ENCODE measurements at regions of chr1 and their contacts with region 1.

Region 1: GRCh38 chr1:12124693-12125421 is 41.9 kb upstream of the TNFRSF1B start:
- DNase-seq: peak; percentile 77
- H3K4me3 ChIP-seq: peak overlapping the region in 1 of 2 experiments; percentile 14; a peak in 1 of 4 replicates
- H3K27ac ChIP-seq: no peak overlapping the region
- H3K4me1 ChIP-seq: no peaks in the 10 kb centered on the region
- H3K27me3 ChIP-seq: peaks cover 3% of the 10 kb centered on the region; the same call in 1 of the 2 replicates
- CTCF ChIP-seq: peak; percentile 95
- EP300 ChIP-seq: no peak
- RAD21 ChIP-seq: peak; percentile 99

Region 2: GRCh38 chr1:11126569-11126968 is 998.3 kb before region 1 on chr1:
- CTCF ChIA-PET with region 1: no interaction called
- POLR2A ChIA-PET with region 1: no interaction called
- DNase-seq: no peak
- H3K4me3 ChIP-seq: no peak overlapping the region
- H3K27ac ChIP-seq: no peak overlapping the region
- H3K4me1 ChIP-seq: no peaks in the 10 kb centered on the region
- H3K27me3 ChIP-seq: no peaks in the 10 kb centered on the region
- CTCF ChIP-seq: no peak
- EP300 ChIP-seq: no peak
- RAD21 ChIP-seq: no peak

Region 3: DNA sequence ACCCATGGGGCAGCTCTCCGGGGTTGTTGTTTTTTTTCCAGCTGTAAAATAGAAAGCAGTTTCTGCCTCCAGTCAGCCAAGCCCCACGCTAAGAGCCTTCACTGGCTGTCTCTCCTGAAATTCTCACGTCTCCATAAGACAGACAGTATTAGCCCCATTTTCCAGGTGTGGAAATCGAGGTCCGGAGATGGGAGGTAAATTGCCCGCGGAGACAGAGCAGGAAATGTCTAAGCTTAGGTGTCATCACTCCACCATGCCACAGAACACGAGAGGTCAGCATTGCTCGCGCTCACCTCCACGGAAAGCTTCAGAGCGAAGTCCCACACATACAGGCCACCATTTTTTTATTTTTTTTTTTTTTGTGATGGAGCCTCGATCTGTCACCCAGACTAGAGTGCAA is 17.1 kb before region 1 on chr1:
- CTCF ChIA-PET with region 1: interaction called, 55 read pairs
- POLR2A ChIA-PET with region 1: no interaction called
- DNase-seq: no peak
- H3K4me3 ChIP-seq: no peak overlapping the region
- H3K27ac ChIP-seq: no peak overlapping the region
- H3K4me1 ChIP-seq: no peaks in the 10 kb centered on the region; a peak in 1 of 4 replicates
- H3K27me3 ChIP-seq: peaks cover 7% of the 10 kb centered on the region; the same call in 1 of the 2 replicates
- CTCF ChIP-seq: no peak
- EP300 ChIP-seq: no peak
- RAD21 ChIP-seq: no peak

Region 4: GRCh38 chr1:12153181-12153785 is 28.4 kb after region 1 on chr1:
- CTCF ChIA-PET with region 1: interaction called, 34 read pairs
- POLR2A ChIA-PET with region 1: no interaction called
- DNase-seq: no peak
- H3K4me3 ChIP-seq: no peak overlapping the region
- H3K27ac ChIP-seq: no peak overlapping the region
- H3K4me1 ChIP-seq: peaks cover 0 to 6% of the 10 kb centered on the region in 2 experiments; a peak in 1 of 4 replicates
- H3K27me3 ChIP-seq: no peaks in the 10 kb centered on the region
- CTCF ChIP-seq: no peak
- EP300 ChIP-seq: no peak
- RAD21 ChIP-seq: no peak

Region 5: GRCh38 chr1:12184008-12184681 is 59.3 kb after region 1 on chr1:
- CTCF ChIA-PET with region 1: interaction called, 79 read pairs
- POLR2A ChIA-PET with region 1: no interaction called
- DNase-seq: peak; percentile 93
- H3K4me3 ChIP-seq: no peak overlapping the region
- H3K27ac ChIP-seq: peak overlapping the region; percentile 17 to 81; a peak in 3 of 4 replicates
- H3K4me1 ChIP-seq: peaks cover 10 to 32% of the 10 kb centered on the region in 2 experiments; a peak in 3 of 4 replicates
- H3K27me3 ChIP-seq: no peaks in the 10 kb centered on the region
- CTCF ChIP-seq: peak; percentile 22; the same call in 1 of the 2 replicates
- EP300 ChIP-seq: no peak; a peak in 1 of 4 replicates
- RAD21 ChIP-seq: peak; percentile 32

Region 6: DNA sequence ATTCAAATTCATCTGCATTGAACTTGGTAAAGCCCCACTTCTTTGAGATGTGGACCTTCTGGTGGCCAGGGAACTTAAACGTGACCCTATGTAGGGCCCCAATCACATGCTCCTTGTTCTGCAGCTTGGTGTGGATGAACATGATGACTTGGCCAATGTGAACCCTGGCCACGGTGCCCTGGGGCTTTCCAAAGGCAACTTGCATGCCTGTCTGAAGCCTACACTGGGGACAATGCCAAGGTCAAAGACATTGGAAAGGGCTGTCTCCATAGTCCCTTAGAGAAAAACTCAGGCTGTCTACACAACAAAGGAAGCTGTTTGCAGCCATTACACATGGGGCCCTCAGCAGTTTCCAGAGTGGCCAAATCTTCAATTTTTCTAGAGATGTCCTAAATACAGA is 96.0 kb after region 1 on chr1:
- CTCF ChIA-PET with region 1: interaction called, 436 read pairs
- POLR2A ChIA-PET with region 1: no interaction called
- DNase-seq: no peak
- H3K4me3 ChIP-seq: no peak overlapping the region
- H3K27ac ChIP-seq: no peak overlapping the region
- H3K4me1 ChIP-seq: no peaks in the 10 kb centered on the region
- H3K27me3 ChIP-seq: no peaks in the 10 kb centered on the region; the same call in 1 of the 2 replicates
- CTCF ChIP-seq: no peak
- EP300 ChIP-seq: no peak
- RAD21 ChIP-seq: no peak

Region 7: DNA sequence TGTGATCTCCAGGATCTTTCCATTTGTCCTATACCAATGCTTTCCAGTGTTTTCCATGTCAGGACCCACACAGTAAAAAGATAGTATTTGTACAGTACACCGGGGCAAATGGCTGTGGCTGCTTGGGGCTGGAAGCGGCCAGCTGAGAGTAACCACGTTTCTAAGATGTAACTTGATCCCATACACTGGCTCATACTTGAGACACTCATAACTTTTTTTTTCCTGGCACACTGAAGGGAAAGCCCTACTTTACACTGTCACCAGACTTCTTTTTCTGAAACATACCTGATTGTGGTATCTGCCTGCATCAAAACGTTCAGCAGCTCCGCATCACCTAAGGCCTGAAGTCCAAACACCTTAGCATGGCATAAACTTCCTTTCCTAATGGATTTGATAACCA is 126.6 kb after region 1 on chr1:
- CTCF ChIA-PET with region 1: no interaction called
- POLR2A ChIA-PET with region 1: no interaction called
- DNase-seq: no peak
- H3K4me3 ChIP-seq: no peak overlapping the region
- H3K27ac ChIP-seq: no peak overlapping the region
- H3K4me1 ChIP-seq: no peaks in the 10 kb centered on the region
- H3K27me3 ChIP-seq: no peaks in the 10 kb centered on the region
- CTCF ChIP-seq: no peak
- EP300 ChIP-seq: no peak
- RAD21 ChIP-seq: no peak

Region 8: DNA sequence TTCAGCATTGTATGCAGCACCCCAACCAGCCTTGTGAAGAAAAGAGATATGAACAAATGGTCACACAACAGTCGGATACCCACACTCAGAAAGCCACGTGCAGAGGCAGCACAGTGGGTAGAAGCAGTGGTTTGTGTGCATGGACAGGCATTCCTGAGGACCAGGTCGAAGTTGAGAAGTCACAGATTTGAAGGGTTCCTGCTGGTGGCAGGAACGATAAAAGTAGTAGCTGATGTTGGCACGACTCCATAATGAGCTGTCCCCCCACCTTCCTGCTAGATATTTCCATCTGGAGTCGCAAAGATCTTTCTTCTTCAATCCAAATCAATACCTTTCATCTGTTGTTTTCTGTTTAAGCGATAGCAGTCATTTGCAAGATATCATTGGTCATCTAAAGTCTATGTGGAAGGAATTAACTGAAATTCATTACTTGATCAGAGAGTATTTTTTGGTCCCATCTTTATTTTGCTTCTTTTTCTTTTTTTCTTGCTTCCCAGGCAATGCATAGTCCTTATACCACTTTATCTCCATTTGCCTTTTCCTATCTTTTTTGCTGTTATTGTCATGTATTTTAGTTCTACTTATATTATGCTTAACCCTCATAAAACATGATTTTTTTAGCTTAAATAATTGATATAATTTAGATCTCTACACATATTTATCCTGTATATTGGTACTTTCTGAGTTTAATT is 316.7 kb after region 1 on chr1:
- CTCF ChIA-PET with region 1: no interaction called
- POLR2A ChIA-PET with region 1: no interaction called
- DNase-seq: no peak
- H3K4me3 ChIP-seq: no peak overlapping the region
- H3K27ac ChIP-seq: no peak overlapping the region
- H3K4me1 ChIP-seq: peaks cover 0 to 1% of the 10 kb centered on the region in 2 experiments; a peak in 1 of 4 replicates
- H3K27me3 ChIP-seq: no peaks in the 10 kb centered on the region
- CTCF ChIP-seq: no peak
- EP300 ChIP-seq: no peak
- RAD21 ChIP-seq: no peak